HCT116 (cell line): ENCODE measurements at regions of chr5 and their contacts with region 1.

Region 1: GRCh38 chr5:142922223-142922952 is 152.2 kb downstream of the ARHGAP26 start:
- DNase-seq: no peak
- ATAC-seq: peak; percentile 75
- H3K4me3 ChIP-seq: no peak overlapping the region
- H3K27ac ChIP-seq: no peak overlapping the region
- H3K4me1 ChIP-seq: no peaks in the 10 kb centered on the region
- H3K27me3 ChIP-seq: no peaks in the 10 kb centered on the region
- CTCF ChIP-seq: peak; percentile 35 to 56 (median 51); a peak in 5 of 6 replicates
- POLR2A ChIP-seq: no peak
- RAD21 ChIP-seq: peak; percentile 69

Region 2: GRCh38 chr5:142959683-142960657 is 37.6 kb after region 1 on chr5:
- CTCF ChIA-PET with region 1: interaction called, 7 read pairs
- POLR2A ChIA-PET with region 1: no interaction called
- RAD21 ChIA-PET with region 1: no interaction called
- intact Hi-C with region 1: loop called (anchors 1 kb)
- DNase-seq: peak; percentile 81
- ATAC-seq: peak; percentile 91
- H3K4me3 ChIP-seq: no peak overlapping the region
- H3K27ac ChIP-seq: peak overlapping the region; percentile 61
- H3K4me1 ChIP-seq: peaks cover 28 to 29% of the 10 kb centered on the region in 2 experiments
- H3K27me3 ChIP-seq: no peaks in the 10 kb centered on the region
- CTCF ChIP-seq: no peak
- POLR2A ChIP-seq: no peak
- RAD21 ChIP-seq: no peak

Region 3: DNA sequence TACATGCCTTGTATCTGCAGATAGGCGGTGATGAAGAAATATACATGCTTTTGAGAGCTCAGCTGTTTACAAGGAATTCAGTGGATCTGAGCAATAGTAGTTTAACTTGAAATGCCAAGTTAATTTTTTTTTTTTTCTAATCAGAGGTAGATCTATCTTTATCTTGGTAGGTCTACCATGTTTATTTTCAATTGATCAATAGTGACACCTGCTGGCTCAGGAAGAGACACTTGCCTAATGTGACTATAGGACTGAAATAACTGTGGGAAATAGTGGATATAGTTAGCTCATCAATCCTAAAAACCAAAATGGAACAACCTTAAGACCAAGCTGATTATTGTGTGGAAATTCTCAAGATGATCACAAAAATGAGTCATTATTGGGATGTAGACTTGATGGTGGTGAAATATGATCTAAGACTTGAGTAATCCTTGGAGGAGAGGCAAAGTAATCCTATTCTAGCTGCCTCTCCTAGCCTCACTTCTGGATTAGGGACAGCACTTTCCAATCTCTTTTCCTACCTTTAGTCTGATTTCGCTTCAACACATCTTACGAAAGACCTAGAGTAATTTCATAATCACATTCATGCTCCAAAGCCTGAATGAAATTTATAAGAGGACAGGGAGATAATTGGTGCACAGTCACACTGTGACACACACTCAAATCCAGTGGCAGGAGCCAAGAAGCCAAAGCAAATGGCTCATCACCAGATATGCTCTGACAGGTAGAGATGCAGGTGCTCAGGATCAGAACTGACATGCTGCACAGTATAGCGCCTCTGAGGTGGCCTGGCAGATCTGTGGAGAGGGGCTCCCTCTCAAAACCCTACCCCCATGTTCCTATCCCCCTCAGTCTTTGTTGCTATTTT is 1045.9 kb after region 1 on chr5:
- CTCF ChIA-PET with region 1: no interaction called
- POLR2A ChIA-PET with region 1: no interaction called
- RAD21 ChIA-PET with region 1: interaction called in 1 of 2 experiments, 5 read pairs
- intact Hi-C with region 1: loop called (anchors 5 kb)
- DNase-seq: peak; percentile 22
- ATAC-seq: peak; percentile 78
- H3K4me3 ChIP-seq: no peak overlapping the region
- H3K27ac ChIP-seq: no peak overlapping the region
- H3K4me1 ChIP-seq: no peaks in the 10 kb centered on the region
- H3K27me3 ChIP-seq: no peaks in the 10 kb centered on the region
- CTCF ChIP-seq: peak; percentile 42 to 66 (median 50); a peak in 4 of 6 replicates
- POLR2A ChIP-seq: no peak
- RAD21 ChIP-seq: peak; percentile 67

Region 4: DNA sequence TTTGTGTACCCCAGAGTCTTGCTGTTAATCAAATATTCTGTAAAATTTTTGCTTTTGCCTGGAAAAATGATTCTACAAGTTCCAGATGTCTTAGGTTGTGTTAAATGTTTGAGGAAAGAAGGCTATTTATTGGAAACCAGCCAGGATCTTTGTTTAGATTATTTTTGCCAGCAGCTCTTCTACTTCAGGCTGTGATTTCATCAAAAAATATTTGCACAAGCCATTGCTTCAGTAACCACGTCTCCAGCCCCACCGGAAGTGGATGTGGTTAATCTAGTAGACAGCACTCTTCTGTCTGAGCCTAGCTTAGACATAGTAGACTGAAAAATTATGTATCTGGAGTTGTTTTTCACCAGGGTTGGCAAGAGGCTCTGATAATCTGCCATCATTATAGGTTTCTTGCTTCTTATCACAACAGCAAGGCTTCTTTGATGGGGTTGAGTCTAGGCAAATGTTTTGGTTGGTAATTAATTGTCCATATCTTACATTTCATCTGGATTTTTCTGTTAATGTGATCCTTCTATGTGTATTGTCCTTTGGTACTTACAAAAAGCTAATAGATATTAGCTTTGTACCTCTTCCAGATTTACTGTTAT is 1265.4 kb after region 1 on chr5:
- CTCF ChIA-PET with region 1: no interaction called
- POLR2A ChIA-PET with region 1: no interaction called
- RAD21 ChIA-PET with region 1: no interaction called
- intact Hi-C with region 1: loop called (anchors 5 kb)
- DNase-seq: no peak
- ATAC-seq: no peak
- H3K4me3 ChIP-seq: no peak overlapping the region
- H3K27ac ChIP-seq: no peak overlapping the region
- H3K4me1 ChIP-seq: no peaks in the 10 kb centered on the region
- H3K27me3 ChIP-seq: peaks cover 12% of the 10 kb centered on the region; the same call in 1 of the 2 replicates
- CTCF ChIP-seq: no peak
- POLR2A ChIP-seq: no peak
- RAD21 ChIP-seq: no peak